Activated CD4-positive, alpha-beta memory T cell treated with anti-CD3 and anti-CD28 coated beads for 36 hours (primary cell): ENCODE measurements at regions of chr2 and their contacts with region 1.

Region 1: GRCh38 chr2:195656859-195657633 is at the start of gene SLC39A10:
- DNase-seq: peak; percentile 99
- H3K4me3 Mint-ChIP-seq: peak within 1 kb of the TSS; percentile 98
- H3K27ac Mint-ChIP-seq: peak within 1 kb of the TSS; percentile 100
- H3K4me1 Mint-ChIP-seq: peaks cover 35% of the 10 kb centered on the region
- H3K27me3 Mint-ChIP-seq: peaks cover 3% of the 10 kb centered on the region
- total RNA-seq, gene SLC39A10: 36.1 to 37.4 TPM

Region 2: GRCh38 chr2:195364015-195364965 is 292.8 kb before region 1 on chr2:
- CTCF ChIA-PET with region 1: no interaction called
- POLR2A ChIA-PET with region 1: no interaction called
- intact Hi-C with region 1: loop called (anchors 2 kb)
- DNase-seq: no peak
- H3K4me3 Mint-ChIP-seq: no peak overlapping the region
- H3K27ac Mint-ChIP-seq: no peak overlapping the region
- H3K4me1 Mint-ChIP-seq: peaks cover 29% of the 10 kb centered on the region
- H3K27me3 Mint-ChIP-seq: no peaks in the 10 kb centered on the region

Region 3: GRCh38 chr2:195498176-195498575 is 158.9 kb before region 1 on chr2:
- CTCF ChIA-PET with region 1: interaction called, 31 read pairs
- POLR2A ChIA-PET with region 1: no interaction called
- intact Hi-C with region 1: loop called (anchors 1 kb)
- DNase-seq: peak; percentile 66
- H3K4me3 Mint-ChIP-seq: no peak overlapping the region
- H3K27ac Mint-ChIP-seq: no peak overlapping the region
- H3K4me1 Mint-ChIP-seq: peaks cover 32% of the 10 kb centered on the region
- H3K27me3 Mint-ChIP-seq: no peaks in the 10 kb centered on the region

Region 4: GRCh38 chr2:195559431-195559914 is 97.6 kb before region 1 on chr2:
- CTCF ChIA-PET with region 1: interaction called, 16 read pairs
- POLR2A ChIA-PET with region 1: interaction called, 144 read pairs
- intact Hi-C with region 1: loop called (anchors 1 kb)
- DNase-seq: peak; percentile 91
- H3K4me3 Mint-ChIP-seq: peak overlapping the region; percentile 63
- H3K27ac Mint-ChIP-seq: peak overlapping the region; percentile 92
- H3K4me1 Mint-ChIP-seq: peaks cover 61% of the 10 kb centered on the region
- H3K27me3 Mint-ChIP-seq: no peaks in the 10 kb centered on the region

Region 5: GRCh38 chr2:195779491-195779890 is 122.4 kb after region 1 on chr2:
- CTCF ChIA-PET with region 1: no interaction called
- POLR2A ChIA-PET with region 1: no interaction called
- intact Hi-C with region 1: no loop called
- DNase-seq: no peak
- H3K4me3 Mint-ChIP-seq: no peak overlapping the region
- H3K27ac Mint-ChIP-seq: no peak overlapping the region
- H3K4me1 Mint-ChIP-seq: no peaks in the 10 kb centered on the region
- H3K27me3 Mint-ChIP-seq: no peaks in the 10 kb centered on the region

Region 6: GRCh38 chr2:195820373-195820772 is 163.3 kb after region 1 on chr2:
- CTCF ChIA-PET with region 1: no interaction called
- POLR2A ChIA-PET with region 1: no interaction called
- intact Hi-C with region 1: no loop called
- DNase-seq: no peak
- H3K4me3 Mint-ChIP-seq: no peak overlapping the region
- H3K27ac Mint-ChIP-seq: no peak overlapping the region
- H3K4me1 Mint-ChIP-seq: no peaks in the 10 kb centered on the region
- H3K27me3 Mint-ChIP-seq: peaks cover 2% of the 10 kb centered on the region

Region 7: GRCh38 chr2:195923889-195924288 is 266.8 kb after region 1 on chr2:
- CTCF ChIA-PET with region 1: no interaction called
- POLR2A ChIA-PET with region 1: no interaction called
- intact Hi-C with region 1: loop called (anchors 1 kb)
- DNase-seq: no peak
- H3K4me3 Mint-ChIP-seq: no peak overlapping the region
- H3K27ac Mint-ChIP-seq: no peak overlapping the region
- H3K4me1 Mint-ChIP-seq: no peaks in the 10 kb centered on the region
- H3K27me3 Mint-ChIP-seq: no peaks in the 10 kb centered on the region